Activated B cell treated with CpG ODN at 0.5 μM for 24 hours (primary cell): ENCODE measurements at regions of chr12 and their contacts with region 1.

Region 1: DNA sequence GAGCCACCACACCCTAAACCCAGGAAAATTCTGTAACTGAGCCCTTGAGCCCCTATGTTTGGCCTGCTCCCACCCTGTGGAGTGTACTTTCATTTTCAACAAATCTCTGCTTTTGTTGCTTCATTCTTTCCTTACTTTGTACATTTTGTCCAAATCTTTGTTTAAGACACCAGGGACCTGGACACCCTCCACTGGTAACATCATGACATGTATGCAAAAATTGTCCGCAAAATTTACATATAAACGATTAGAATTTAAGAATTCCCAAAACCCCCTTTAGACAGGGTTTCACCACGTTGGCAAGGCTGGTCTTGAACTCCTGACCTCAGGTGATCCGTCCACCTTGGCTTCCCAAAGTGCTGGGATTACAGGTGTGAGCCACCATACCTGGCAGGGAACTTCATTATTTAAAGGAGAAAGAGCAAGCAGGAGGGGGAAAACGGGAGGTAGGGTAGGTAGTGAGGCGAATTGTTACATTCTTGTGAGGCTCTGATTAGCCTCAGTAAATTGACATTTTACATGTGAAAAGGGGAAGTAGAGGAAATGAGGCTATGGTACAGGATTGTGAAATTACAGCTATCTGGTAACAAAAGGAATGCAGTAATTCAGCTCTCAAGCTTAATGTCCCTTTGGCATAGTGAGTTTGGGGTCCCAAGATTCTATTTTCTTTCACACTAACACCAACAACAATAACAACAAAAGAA is 27.6 kb downstream of the TUBA1A start:
- DNase-seq: no peak
- ATAC-seq: peak; percentile 54
- H3K4me3 Mint-ChIP-seq: peak overlapping the region; percentile 53
- H3K27ac Mint-ChIP-seq: peak overlapping the region; percentile 90
- H3K4me1 Mint-ChIP-seq: peaks cover 37% of the 10 kb centered on the region
- H3K27me3 Mint-ChIP-seq: no peaks in the 10 kb centered on the region
- CTCF ChIP-seq: no peak

Region 2: GRCh38 chr12:49232940-49233841 is 71.9 kb after region 1 on chr12:
- CTCF ChIA-PET with region 1: interaction called, 3 read pairs
- POLR2A ChIA-PET with region 1: interaction called, 4 read pairs
- intact Hi-C with region 1: loop called (anchors 2 kb)
- DNase-seq: no peak
- ATAC-seq: no peak
- H3K4me3 Mint-ChIP-seq: peak overlapping the region; percentile 93
- H3K27ac Mint-ChIP-seq: peak overlapping the region; percentile 89
- H3K4me1 Mint-ChIP-seq: peaks cover 15% of the 10 kb centered on the region
- H3K27me3 Mint-ChIP-seq: no peaks in the 10 kb centered on the region
- CTCF ChIP-seq: no peak